ENCODE measurements at regions of chr7 and their contacts with region 1.

Region 1: GRCh38 chr7:105876091-105876963 is at the start of gene ATXN7L1:
- DNase-seq: peak; percentile 96
- H3K4me3 ChIP-seq: peak within 1 kb of the TSS; percentile 77 to 98 (median 93)
- H3K27ac ChIP-seq: peak within 1 kb of the TSS; percentile 93
- H3K4me1 ChIP-seq: peaks cover 17% of the 10 kb centered on the region
- H3K27me3 ChIP-seq: no peaks in the 10 kb centered on the region
- CTCF ChIP-seq: peak; percentile 29 to 39
- total RNA-seq, gene ATXN7L1: 5.8 to 10.9 TPM

Region 2: GRCh38 chr7:105759670-105760550 is 116.4 kb before region 1 on chr7:
- CTCF ChIA-PET with region 1: no interaction called
- dilution Hi-C with region 1: no loop called
- in situ Hi-C with region 1: loop called in 1 of 2 experiments (anchors 10 kb)
- intact Hi-C with region 1: loop called (anchors 1 kb)
- DNase-seq: peak; percentile 37
- H3K4me3 ChIP-seq: no peak overlapping the region
- H3K27ac ChIP-seq: no peak overlapping the region
- H3K4me1 ChIP-seq: no peaks in the 10 kb centered on the region
- H3K27me3 ChIP-seq: no peaks in the 10 kb centered on the region
- CTCF ChIP-seq: peak; percentile 60 to 68

Region 3: GRCh38 chr7:105769901-105770628 is 106.3 kb before region 1 on chr7:
- CTCF ChIA-PET with region 1: interaction called, 10 read pairs
- dilution Hi-C with region 1: no loop called
- in situ Hi-C with region 1: loop called in 1 of 2 experiments (anchors 10 kb)
- intact Hi-C with region 1: no loop called
- DNase-seq: no peak
- H3K4me3 ChIP-seq: no peak overlapping the region
- H3K27ac ChIP-seq: no peak overlapping the region
- H3K4me1 ChIP-seq: no peaks in the 10 kb centered on the region
- H3K27me3 ChIP-seq: no peaks in the 10 kb centered on the region
- CTCF ChIP-seq: no peak

Region 4: GRCh38 chr7:105776058-105776751 is 100.1 kb before region 1 on chr7:
- CTCF ChIA-PET with region 1: no interaction called
- dilution Hi-C with region 1: no loop called
- in situ Hi-C with region 1: no loop called
- intact Hi-C with region 1: loop called (anchors 1 kb)
- DNase-seq: peak; percentile 96
- H3K4me3 ChIP-seq: no peak overlapping the region
- H3K27ac ChIP-seq: no peak overlapping the region
- H3K4me1 ChIP-seq: peaks cover 13% of the 10 kb centered on the region
- H3K27me3 ChIP-seq: no peaks in the 10 kb centered on the region
- CTCF ChIP-seq: no peak

Region 5: GRCh38 chr7:105806592-105807447 is 69.5 kb before region 1 on chr7:
- CTCF ChIA-PET with region 1: interaction called, 16 read pairs
- dilution Hi-C with region 1: no loop called
- in situ Hi-C with region 1: no loop called
- intact Hi-C with region 1: no loop called
- DNase-seq: peak; percentile 72
- H3K4me3 ChIP-seq: no peak overlapping the region
- H3K27ac ChIP-seq: no peak overlapping the region
- H3K4me1 ChIP-seq: peaks cover 40% of the 10 kb centered on the region
- H3K27me3 ChIP-seq: no peaks in the 10 kb centered on the region
- CTCF ChIP-seq: no peak

Region 6: DNA sequence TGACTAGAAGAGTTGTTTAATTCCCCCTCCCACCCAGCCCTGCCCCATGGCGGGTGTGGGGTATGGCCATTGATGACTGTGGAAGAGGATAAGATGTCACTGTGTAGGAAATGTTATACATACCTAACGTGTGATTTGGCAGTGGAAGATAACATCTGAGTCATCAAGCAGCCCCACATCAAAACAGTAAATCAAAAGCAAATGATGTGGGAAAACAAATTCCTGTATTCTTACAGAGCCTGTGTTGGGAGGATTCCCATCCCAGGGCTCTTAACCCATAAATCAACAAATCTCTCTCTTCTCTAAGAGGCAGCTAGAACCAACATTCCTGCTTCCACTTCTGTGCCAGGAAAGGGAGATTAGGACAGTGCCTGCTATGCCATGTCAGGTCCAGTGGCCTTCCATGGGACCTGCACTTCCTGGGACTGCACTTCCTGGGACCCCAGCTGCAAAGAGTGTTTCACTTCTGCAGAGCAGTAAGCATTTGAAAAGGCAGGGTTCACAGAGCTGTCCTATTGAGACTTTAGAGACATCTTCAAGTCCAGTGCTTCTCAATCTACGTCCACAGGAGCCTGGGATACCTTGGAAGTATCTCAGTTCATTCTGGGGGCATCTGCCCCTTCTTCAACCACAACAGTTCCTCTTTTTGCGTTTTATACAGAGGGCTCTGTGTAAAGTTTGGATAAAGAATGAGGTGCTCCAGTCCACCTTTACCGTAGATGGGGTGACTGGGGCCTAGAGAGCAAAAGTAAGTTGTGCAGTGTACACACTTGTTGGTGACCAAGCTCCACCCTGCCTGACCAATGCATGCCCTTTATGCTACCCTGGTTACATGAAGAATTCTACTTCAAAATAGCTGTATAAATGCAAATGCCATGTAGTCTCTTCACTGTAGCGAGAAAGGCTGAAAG is 45.7 kb before region 1 on chr7:
- CTCF ChIA-PET with region 1: no interaction called
- dilution Hi-C with region 1: no loop called
- in situ Hi-C with region 1: no loop called
- intact Hi-C with region 1: loop called (anchors 5 kb)
- DNase-seq: peak; percentile 83
- H3K4me3 ChIP-seq: no peak overlapping the region
- H3K27ac ChIP-seq: no peak overlapping the region
- H3K4me1 ChIP-seq: peaks cover 15% of the 10 kb centered on the region
- H3K27me3 ChIP-seq: no peaks in the 10 kb centered on the region
- CTCF ChIP-seq: no peak

Region 7: GRCh38 chr7:106009403-106010226 is 133.3 kb after region 1 on chr7:
- CTCF ChIA-PET with region 1: no interaction called
- dilution Hi-C with region 1: no loop called
- in situ Hi-C with region 1: loop called in 1 of 2 experiments (anchors 25 kb)
- intact Hi-C with region 1: loop called (anchors 1 kb)
- DNase-seq: peak; percentile 88
- H3K4me3 ChIP-seq: no peak overlapping the region
- H3K27ac ChIP-seq: no peak overlapping the region
- H3K4me1 ChIP-seq: peaks cover 8% of the 10 kb centered on the region
- H3K27me3 ChIP-seq: no peaks in the 10 kb centered on the region
- CTCF ChIP-seq: peak; percentile 74 to 96

Measured in mammary epithelial cell (primary cell).